Keratinocyte (primary cell): ENCODE measurements at regions of chr9 and their contacts with region 1.

Region 1: DNA sequence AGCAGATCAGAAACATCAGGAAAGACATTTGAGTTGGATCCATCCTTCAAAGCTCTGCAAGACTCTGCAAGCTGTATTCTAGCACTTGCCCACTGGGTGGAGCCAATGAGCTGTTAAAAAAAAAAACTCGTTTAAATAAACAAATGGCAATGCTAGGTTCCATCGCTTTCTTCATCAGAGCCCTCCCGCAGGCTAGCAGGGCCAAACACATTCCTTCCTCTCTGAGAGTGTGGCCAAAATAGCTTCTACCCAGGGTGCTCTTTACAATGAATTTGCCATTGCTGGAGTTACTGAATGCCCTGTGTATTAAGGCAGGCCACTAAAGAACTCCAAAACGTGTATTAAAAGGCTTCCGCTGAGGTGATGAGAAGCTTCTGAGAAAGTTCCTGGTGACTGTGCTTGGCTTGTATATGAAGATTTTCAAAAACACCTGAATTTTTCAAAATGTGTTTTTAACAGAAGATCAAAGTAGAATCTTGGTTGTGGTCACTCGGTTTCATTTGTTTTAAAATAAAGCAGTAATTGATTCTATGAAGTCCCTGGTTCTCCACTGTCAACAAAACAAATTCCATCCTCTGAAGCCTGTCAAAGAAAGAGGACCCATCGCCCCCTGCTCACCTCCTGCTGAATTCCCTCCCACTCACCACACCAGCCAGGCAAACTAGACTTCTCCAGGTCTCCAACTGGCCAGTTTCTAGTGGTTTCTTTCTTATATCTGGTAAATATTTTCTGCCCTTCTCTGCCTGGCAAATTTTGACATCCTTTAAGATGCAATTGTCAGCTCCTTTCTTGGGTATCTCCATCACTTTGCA is 36.5 kb upstream of the EQTN start:
- DNase-seq: peak; percentile 42
- H3K4me3 ChIP-seq: no peak overlapping the region
- H3K27ac ChIP-seq: no peak overlapping the region
- H3K4me1 ChIP-seq: peaks cover 6% of the 10 kb centered on the region
- H3K27me3 ChIP-seq: no peaks in the 10 kb centered on the region
- CTCF ChIP-seq: peak; percentile 48 to 71 (median 63)

Region 2: DNA sequence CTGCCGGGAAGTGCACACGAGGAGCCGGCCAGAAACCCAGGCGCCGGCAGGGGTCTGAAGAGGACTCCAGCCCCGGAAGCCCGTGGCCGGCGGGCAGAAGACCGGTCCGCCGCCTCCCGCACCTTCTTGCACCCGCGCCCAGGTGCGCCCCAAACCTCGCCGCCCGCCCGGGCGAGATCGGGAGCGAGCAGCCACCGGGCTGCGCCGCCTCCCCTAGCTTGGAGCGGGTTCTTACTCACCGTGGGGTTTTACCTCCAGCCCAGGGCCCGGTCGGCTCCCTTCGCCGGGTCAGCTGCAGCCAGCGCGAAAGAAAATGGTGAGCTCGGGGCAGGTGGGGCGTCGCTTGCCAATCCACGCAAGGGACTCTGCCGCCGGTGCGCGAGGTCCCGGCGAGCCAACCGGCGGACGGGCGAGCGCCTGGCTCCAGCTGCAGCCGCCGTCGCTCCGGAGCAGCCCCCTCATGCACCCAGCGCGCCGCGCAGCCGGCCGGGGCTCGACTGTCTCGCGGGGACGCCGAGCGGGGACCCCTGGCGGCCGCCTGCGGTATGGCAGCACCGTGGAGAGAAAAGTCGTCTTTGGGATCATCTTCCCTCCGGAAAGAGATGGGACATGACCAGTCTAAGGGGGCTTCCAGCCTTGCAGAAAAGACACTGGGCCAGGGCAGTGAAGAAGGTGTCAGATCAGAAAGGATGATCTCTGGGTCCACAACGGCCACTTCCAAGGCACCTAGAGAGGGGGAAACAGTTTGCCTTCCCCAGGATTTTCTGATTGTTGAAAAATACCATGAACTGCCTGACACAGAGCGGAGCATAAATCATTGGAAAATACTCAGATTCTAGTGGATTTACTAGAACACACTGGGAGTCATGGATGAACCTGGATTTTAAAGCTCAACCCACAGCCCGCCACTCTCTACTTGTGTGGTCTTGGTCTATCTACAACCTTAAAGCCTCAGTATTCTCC is 196.2 kb after region 1 on chr9 and contains the start of gene MOB3B:
- dilution Hi-C with region 1: loop called (anchors 25 kb)
- DNase-seq: no peak
- H3K4me3 ChIP-seq: peak within 1 kb of the TSS; percentile 65 to 85 (median 85)
- H3K27ac ChIP-seq: peak within 1 kb of the TSS; percentile 97
- H3K4me1 ChIP-seq: peaks cover 51% of the 10 kb centered on the region
- H3K27me3 ChIP-seq: no peaks in the 10 kb centered on the region
- CTCF ChIP-seq: peak; percentile 73 to 82 (median 82)
- polyA plus RNA-seq, gene MOB3B: 32.6 to 40.8 TPM (median 35.3 TPM) in 3 replicates